Activated CD4-positive, alpha-beta T cell treated with anti-CD3 and anti-CD28 coated beads, Interleukin-2, amount 10 ng/mL, durations not matched to agents 24 days and 14 days (primary cell): ENCODE measurements at regions of chr10 and their contacts with region 1.

Region 1: GRCh38 chr10:110535958-110536891 is 31.3 kb upstream of the SMC3 start:
- DNase-seq: peak; percentile 85
- H3K4me3 Mint-ChIP-seq: peak overlapping the region; percentile 38
- H3K27ac Mint-ChIP-seq: peak overlapping the region; percentile 84
- H3K4me1 Mint-ChIP-seq: peaks cover 55% of the 10 kb centered on the region
- H3K27me3 Mint-ChIP-seq: no peaks in the 10 kb centered on the region

Region 2: GRCh38 chr10:110425684-110426293 is 110.4 kb before region 1 on chr10:
- intact Hi-C with region 1: loop called (anchors 1 kb)
- DNase-seq: peak; percentile 82
- H3K4me3 Mint-ChIP-seq: peak overlapping the region; percentile 51
- H3K27ac Mint-ChIP-seq: peak overlapping the region; percentile 92
- H3K4me1 Mint-ChIP-seq: peaks cover 55% of the 10 kb centered on the region
- H3K27me3 Mint-ChIP-seq: no peaks in the 10 kb centered on the region

Region 3: DNA sequence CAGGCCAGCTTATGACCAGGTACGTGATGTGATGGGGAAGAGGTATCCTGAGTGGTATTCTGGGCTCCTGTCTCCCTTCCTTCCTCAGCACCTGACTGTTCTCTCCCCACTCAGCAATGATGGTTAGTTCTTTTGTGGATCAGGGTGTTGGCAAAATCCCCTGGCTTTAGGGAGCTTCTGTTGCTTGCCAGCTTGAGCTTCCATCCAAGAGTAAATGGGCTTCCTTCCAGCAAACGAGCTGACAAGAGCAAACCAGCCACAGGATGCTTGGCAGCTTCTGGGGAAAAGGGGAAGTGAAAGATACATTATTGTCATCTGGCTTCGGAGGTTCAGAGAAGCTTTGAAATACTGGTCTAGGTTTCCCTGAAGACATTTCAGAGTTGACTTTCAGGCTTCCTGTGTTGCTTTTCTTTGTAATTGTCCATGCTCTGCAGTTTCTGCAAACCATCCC is 33.3 kb before region 1 on chr10:
- intact Hi-C with region 1: loop called (anchors 1 kb)
- DNase-seq: peak; percentile 84
- H3K4me3 Mint-ChIP-seq: peak overlapping the region; percentile 99
- H3K27ac Mint-ChIP-seq: peak overlapping the region; percentile 92
- H3K4me1 Mint-ChIP-seq: peaks cover 78% of the 10 kb centered on the region
- H3K27me3 Mint-ChIP-seq: no peaks in the 10 kb centered on the region

Region 4: GRCh38 chr10:110513949-110514348 is 22.3 kb before region 1 on chr10:
- intact Hi-C with region 1: no loop called
- DNase-seq: no peak
- H3K4me3 Mint-ChIP-seq: no peak overlapping the region
- H3K27ac Mint-ChIP-seq: peak overlapping the region; percentile 86
- H3K4me1 Mint-ChIP-seq: peaks cover 50% of the 10 kb centered on the region
- H3K27me3 Mint-ChIP-seq: no peaks in the 10 kb centered on the region

Region 5: GRCh38 chr10:110547139-110547761 is 11.0 kb after region 1 on chr10:
- intact Hi-C with region 1: loop called (anchors 1 kb)
- DNase-seq: peak; percentile 77
- H3K4me3 Mint-ChIP-seq: peak overlapping the region; percentile 47
- H3K27ac Mint-ChIP-seq: peak overlapping the region; percentile 10
- H3K4me1 Mint-ChIP-seq: peaks cover 19% of the 10 kb centered on the region
- H3K27me3 Mint-ChIP-seq: peaks cover 28% of the 10 kb centered on the region

Region 6: GRCh38 chr10:110893559-110894179 is 357.4 kb after region 1 on chr10:
- intact Hi-C with region 1: no loop called
- DNase-seq: peak; percentile 61
- H3K4me3 Mint-ChIP-seq: no peak overlapping the region
- H3K27ac Mint-ChIP-seq: no peak overlapping the region
- H3K4me1 Mint-ChIP-seq: peaks cover 9% of the 10 kb centered on the region
- H3K27me3 Mint-ChIP-seq: no peaks in the 10 kb centered on the region